ENCODE measurements at regions of chr5 and their contacts with region 1.

Region 1: GRCh38 chr5:172162323-172162986 is 25.6 kb downstream of the STK10 start:
- DNase-seq: no peak
- CTCF ChIP-seq: no peak

Region 2: GRCh38 chr5:172035039-172035438 is 127.4 kb before region 1 on chr5:
- CTCF ChIA-PET with region 1: no interaction called
- POLR2A ChIA-PET with region 1: no interaction called
- DNase-seq: peak; percentile 74
- CTCF ChIP-seq: no peak

Region 3: GRCh38 chr5:172179361-172179989 is 17.0 kb after region 1 on chr5:
- CTCF ChIA-PET with region 1: interaction called, 33 read pairs
- POLR2A ChIA-PET with region 1: interaction called, 5 read pairs
- DNase-seq: peak; percentile 59
- CTCF ChIP-seq: no peak

Region 4: DNA sequence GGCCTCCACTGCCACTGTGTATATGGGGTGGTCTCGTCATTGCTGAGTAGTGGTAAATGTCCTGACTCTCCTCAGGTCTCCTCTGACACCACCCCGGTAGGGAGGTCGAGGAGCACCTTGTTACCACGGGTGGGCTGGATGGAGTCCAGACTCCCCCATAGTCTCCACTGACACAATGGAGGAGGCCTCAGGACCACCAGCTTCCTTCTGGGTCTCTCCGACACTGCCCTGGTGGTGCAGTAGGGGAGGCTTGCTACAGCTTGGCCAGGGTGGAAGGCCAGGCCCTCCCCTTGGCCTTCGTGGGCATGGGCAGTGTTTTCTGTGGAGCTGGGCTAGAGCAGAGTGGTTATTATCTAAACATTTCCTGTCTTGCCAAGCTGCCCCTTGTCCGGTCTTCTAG is 307.2 kb after region 1 on chr5:
- CTCF ChIA-PET with region 1: no interaction called
- POLR2A ChIA-PET with region 1: no interaction called
- DNase-seq: no peak
- CTCF ChIP-seq: no peak